ENCODE measurements at regions of chr9 and their contacts with region 1.

Region 1: GRCh38 chr9:122810306-122810946 is 10.5 kb downstream of the OR1K1 start:
- DNase-seq: peak; percentile 91
- H3K4me3 Mint-ChIP-seq: no peak overlapping the region
- H3K27ac Mint-ChIP-seq: no peak overlapping the region
- H3K4me1 Mint-ChIP-seq: peaks cover 23% of the 10 kb centered on the region
- H3K27me3 Mint-ChIP-seq: no peaks in the 10 kb centered on the region

Region 2: GRCh38 chr9:121455527-121456239 is 1354.7 kb before region 1 on chr9:
- intact Hi-C with region 1: loop called (anchors 5 kb)
- DNase-seq: peak; percentile 77
- H3K4me3 Mint-ChIP-seq: peak overlapping the region; percentile 34
- H3K27ac Mint-ChIP-seq: peak overlapping the region; percentile 41
- H3K4me1 Mint-ChIP-seq: peaks cover 21% of the 10 kb centered on the region
- H3K27me3 Mint-ChIP-seq: peaks cover 29% of the 10 kb centered on the region

Region 3: DNA sequence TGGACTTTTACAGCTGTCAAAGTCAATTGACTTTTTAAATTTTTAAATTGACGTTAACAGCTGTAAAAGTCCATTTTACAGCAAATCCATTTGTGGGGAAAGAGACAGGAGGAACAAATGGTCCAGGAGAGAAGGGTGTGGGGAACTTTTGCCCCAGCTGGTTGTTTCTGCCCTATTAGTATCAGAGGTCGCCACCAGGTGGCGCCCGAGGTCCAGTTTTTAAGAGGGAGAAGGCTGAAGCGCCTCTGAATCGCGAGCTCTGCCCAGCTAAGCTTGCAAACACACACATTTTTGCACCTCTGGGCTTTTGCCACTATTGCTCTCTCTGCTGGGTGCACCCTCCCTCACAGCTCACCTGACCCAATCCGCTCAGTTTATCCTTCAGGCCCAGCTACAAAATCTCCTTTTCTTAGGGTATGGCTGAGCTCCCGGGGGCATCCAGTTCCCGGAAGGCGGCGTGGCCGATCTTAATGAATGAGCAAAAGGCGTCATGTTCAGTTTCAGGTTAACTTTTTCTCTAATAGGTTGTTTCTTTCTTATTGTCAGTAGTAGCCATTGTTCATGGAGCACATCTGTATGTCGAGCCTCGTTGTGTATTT is 711.1 kb before region 1 on chr9:
- intact Hi-C with region 1: loop called (anchors 2 kb)
- DNase-seq: peak; percentile 93
- H3K4me3 Mint-ChIP-seq: peak overlapping the region; percentile 24
- H3K27ac Mint-ChIP-seq: no peak overlapping the region
- H3K4me1 Mint-ChIP-seq: peaks cover 16% of the 10 kb centered on the region
- H3K27me3 Mint-ChIP-seq: peaks cover 28% of the 10 kb centered on the region

Region 4: GRCh38 chr9:122350638-122351355 is 459.6 kb before region 1 on chr9:
- intact Hi-C with region 1: loop called (anchors 5 kb)
- DNase-seq: peak; percentile 94
- H3K4me3 Mint-ChIP-seq: no peak overlapping the region
- H3K27ac Mint-ChIP-seq: no peak overlapping the region
- H3K4me1 Mint-ChIP-seq: peaks cover 22% of the 10 kb centered on the region
- H3K27me3 Mint-ChIP-seq: peaks cover 38% of the 10 kb centered on the region

Region 5: DNA sequence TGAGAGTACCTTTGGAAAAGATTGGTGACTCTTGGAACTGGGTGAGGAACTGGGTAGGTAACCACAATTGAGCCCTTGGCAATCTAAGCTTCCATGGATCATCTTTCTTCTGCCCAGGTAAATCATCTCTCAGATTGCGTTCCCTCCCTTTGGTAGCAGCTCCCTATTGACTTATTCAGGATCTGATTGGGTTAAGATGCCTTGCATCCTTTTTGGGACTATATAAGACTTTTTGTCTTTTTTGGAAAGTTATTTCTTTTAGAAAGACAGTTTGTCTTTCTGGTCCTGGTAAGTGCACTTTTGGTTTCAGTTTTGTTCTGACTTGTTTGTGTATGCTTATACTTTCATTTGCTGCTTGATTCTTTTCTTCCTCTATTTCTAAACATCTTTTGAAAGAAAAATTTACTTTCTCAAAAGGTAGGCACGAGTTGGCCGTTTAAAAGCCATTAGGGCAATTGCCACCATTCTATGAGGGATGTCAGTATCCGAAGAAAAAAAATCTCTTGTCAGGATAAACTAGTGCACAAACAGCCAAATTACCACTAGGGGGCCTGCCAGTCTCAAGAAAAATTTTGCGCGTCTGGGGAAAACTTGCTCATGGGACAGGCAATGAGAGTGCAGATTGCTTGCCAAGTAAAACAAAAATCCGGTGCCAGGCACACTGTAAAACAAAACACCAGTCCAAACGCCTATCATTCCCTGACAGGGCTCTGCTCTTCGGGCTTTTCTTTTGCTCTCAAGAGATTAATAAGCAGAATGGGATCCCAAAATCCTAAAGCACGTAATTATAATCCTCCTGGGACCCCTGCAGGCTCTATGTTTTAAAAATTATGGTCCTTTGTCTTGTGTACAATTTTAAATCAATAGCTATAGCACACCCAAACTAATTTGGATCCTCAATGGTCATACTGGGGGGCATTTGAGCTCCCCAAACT is 345.5 kb before region 1 on chr9:
- intact Hi-C with region 1: loop called (anchors 1 kb)
- DNase-seq: peak; percentile 90
- H3K4me3 Mint-ChIP-seq: peak overlapping the region; percentile 86
- H3K27ac Mint-ChIP-seq: peak overlapping the region; percentile 81
- H3K4me1 Mint-ChIP-seq: peaks cover 12% of the 10 kb centered on the region
- H3K27me3 Mint-ChIP-seq: peaks cover 34% of the 10 kb centered on the region

Region 6: GRCh38 chr9:122672481-122672880 is 137.9 kb before region 1 on chr9:
- intact Hi-C with region 1: no loop called
- DNase-seq: no peak
- H3K4me3 Mint-ChIP-seq: no peak overlapping the region
- H3K27ac Mint-ChIP-seq: no peak overlapping the region
- H3K4me1 Mint-ChIP-seq: no peaks in the 10 kb centered on the region
- H3K27me3 Mint-ChIP-seq: no peaks in the 10 kb centered on the region

Region 7: DNA sequence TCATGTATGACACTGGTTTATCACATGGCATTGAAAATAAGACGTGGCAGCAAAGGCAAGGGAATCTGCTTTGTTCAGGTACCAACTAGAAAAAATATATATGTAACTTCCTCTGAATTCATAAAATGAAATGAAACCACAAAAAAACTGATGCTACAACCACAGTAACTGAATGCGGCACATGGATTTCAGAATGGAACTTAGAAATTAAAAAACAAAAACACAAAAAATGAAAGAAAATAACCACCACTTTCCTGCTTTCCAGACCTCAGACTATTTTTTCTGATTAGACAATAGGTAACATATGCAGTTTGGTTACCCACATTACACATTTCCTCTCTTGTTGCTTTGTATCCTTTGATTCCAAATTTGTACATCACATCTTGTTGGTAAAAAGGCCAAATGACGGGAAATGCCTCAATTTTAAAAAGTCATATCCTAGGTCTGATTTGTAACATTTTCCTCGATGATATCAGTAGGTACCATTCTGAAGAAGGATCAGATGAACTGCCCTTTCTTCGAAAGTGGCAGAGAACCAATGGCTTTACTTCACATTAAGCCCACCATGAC is 36.0 kb after region 1 on chr9:
- intact Hi-C with region 1: loop called (anchors 1 kb)
- DNase-seq: no peak
- H3K4me3 Mint-ChIP-seq: peak overlapping the region; percentile 44
- H3K27ac Mint-ChIP-seq: peak overlapping the region; percentile 94
- H3K4me1 Mint-ChIP-seq: peaks cover 31% of the 10 kb centered on the region
- H3K27me3 Mint-ChIP-seq: no peaks in the 10 kb centered on the region

Region 8: GRCh38 chr9:123338710-123339665 is 528.6 kb after region 1 on chr9:
- intact Hi-C with region 1: loop called (anchors 2 kb)
- DNase-seq: peak; percentile 89
- H3K4me3 Mint-ChIP-seq: peak overlapping the region; percentile 80
- H3K27ac Mint-ChIP-seq: peak overlapping the region; percentile 97
- H3K4me1 Mint-ChIP-seq: peaks cover 43% of the 10 kb centered on the region
- H3K27me3 Mint-ChIP-seq: no peaks in the 10 kb centered on the region

Measured in activated CD4-positive, alpha-beta T cell treated with anti-CD3 and anti-CD28 coated beads, Interleukin-2, amount 10 ng/mL, durations not matched to agents 24 days and 14 days (primary cell).